ENCODE measurements at regions of chr2 and their contacts with region 1.

Region 1: GRCh38 chr2:68467077-68467960 is at the starts of genes APLF and FBXO48:
- DNase-seq: peak; percentile 99
- ATAC-seq: peak; percentile 93
- H3K4me3 Mint-ChIP-seq: peak within 1 kb of the TSS; percentile 93
- H3K27ac Mint-ChIP-seq: peak within 1 kb of the TSS; percentile 93
- H3K4me1 Mint-ChIP-seq: peaks cover 45% of the 10 kb centered on the region
- H3K27me3 Mint-ChIP-seq: no peaks in the 10 kb centered on the region
- total RNA-seq, gene APLF: 2.5 to 4.3 TPM
- total RNA-seq, gene FBXO48: 2.0 to 2.4 TPM

Region 2: DNA sequence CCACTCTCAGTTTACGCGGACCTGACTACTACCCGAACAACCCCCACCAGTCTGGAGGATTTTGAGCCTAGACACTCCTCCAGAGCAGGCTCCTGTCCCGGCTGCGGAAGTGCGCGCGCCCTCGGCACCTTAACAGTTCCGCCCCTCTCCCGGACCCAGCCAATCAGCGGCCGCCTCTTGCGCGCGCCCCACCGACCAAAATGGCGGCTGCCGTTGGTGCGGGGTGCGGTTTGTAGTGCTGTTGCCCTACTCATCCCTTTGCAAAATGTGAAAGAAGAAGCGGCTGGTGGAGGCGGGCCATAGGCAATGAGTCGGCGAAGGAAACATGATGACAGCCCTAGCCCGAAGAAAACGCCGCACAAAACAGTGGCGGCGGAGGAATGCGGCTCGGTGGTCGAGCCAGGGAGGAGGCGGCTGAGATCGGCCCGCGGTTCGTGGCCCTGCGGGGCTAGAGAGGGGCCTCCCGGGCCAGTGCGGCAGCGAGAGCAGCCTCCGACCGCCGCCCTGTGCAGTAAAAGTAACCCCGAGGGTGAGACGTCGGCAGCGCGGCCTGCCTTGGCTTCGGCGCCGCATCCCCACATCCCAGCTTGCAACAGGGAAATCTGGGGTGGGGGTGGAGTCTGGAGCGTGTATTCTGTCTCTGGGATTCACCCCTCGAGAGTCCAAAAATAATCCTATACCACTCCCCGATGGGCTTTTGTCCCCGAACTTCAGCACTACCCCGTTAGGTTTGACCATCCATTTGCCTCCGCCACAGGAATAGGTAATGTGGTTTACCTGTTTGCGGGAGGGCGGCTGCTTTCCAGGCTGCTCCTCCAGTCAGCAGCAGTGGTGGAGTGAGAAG is 1070.0 kb before region 1 on chr2 and contains the start of gene ETAA1:
- CTCF ChIA-PET with region 1: no interaction called
- POLR2A ChIA-PET with region 1: no interaction called
- intact Hi-C with region 1: loop called in 1 of 2 experiments (anchors 5 kb)
- DNase-seq: peak; percentile 96
- ATAC-seq: peak; percentile 100
- H3K4me3 Mint-ChIP-seq: peak within 1 kb of the TSS; percentile 98
- H3K27ac Mint-ChIP-seq: peak within 1 kb of the TSS; percentile 99
- H3K4me1 Mint-ChIP-seq: peaks cover 12% of the 10 kb centered on the region
- H3K27me3 Mint-ChIP-seq: no peaks in the 10 kb centered on the region
- total RNA-seq, gene ETAA1: 13.7 to 17.1 TPM

Region 3: GRCh38 chr2:68452168-68452900 is 15.0 kb before region 1 on chr2:
- CTCF ChIA-PET with region 1: interaction called, 21 read pairs
- POLR2A ChIA-PET with region 1: no interaction called
- intact Hi-C with region 1: no loop called
- DNase-seq: no peak
- ATAC-seq: no peak
- H3K4me3 Mint-ChIP-seq: no peak overlapping the region
- H3K27ac Mint-ChIP-seq: no peak overlapping the region
- H3K4me1 Mint-ChIP-seq: peaks cover 8% of the 10 kb centered on the region
- H3K27me3 Mint-ChIP-seq: no peaks in the 10 kb centered on the region

Region 4: GRCh38 chr2:68653538-68653982 is 186.2 kb after region 1 on chr2:
- CTCF ChIA-PET with region 1: interaction called, 9 read pairs
- POLR2A ChIA-PET with region 1: no interaction called
- intact Hi-C with region 1: loop called (anchors 1 kb)
- DNase-seq: peak; percentile 73
- ATAC-seq: peak; percentile 90
- H3K4me3 Mint-ChIP-seq: peak overlapping the region; percentile 0
- H3K27ac Mint-ChIP-seq: peak overlapping the region; percentile 68
- H3K4me1 Mint-ChIP-seq: peaks cover 43% of the 10 kb centered on the region
- H3K27me3 Mint-ChIP-seq: peaks cover 15% of the 10 kb centered on the region

Region 5: DNA sequence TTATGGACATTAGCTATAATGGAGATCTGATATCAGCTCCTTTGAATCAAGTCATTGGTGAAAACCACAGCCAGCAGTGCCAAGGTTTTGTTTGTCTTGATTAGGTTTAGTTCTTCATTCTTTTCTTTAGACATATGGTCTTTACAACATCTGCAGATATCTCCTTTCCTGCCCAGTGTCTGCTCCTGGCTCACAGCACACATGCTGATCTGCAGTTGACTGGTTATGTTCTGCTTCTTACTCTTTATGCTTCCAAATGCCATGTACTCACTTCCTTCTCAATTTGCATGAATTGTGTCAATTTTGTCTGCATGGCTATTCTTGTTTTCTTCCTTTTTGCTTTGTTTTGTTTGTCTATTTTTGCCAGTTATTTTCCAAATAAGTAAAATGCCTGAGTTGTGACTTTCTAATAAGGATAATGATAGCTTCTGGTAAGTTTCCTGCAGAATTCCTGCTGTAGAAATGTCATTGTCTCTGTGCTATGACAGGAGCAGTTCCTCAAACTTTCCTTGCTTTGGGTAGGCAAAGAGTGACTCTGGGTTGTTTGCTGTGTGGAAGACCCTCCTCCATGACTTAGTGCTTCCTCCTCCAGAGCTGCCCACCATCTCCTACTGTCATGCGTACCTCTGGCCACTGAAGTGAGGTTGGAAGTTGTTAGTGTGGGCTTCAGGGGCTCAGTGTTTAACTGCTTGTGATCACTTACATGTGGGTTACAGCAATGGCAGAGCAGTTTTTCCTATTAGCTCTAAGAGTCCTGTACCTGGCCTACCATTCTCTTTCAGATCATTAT is 275.5 kb after region 1 on chr2:
- CTCF ChIA-PET with region 1: interaction called, 13 read pairs
- POLR2A ChIA-PET with region 1: interaction called, 3 read pairs
- intact Hi-C with region 1: loop called in 1 of 2 experiments (anchors 5 kb)
- DNase-seq: no peak
- ATAC-seq: no peak
- H3K4me3 Mint-ChIP-seq: peak overlapping the region; percentile 33
- H3K27ac Mint-ChIP-seq: peak overlapping the region; percentile 80
- H3K4me1 Mint-ChIP-seq: peaks cover 97% of the 10 kb centered on the region
- H3K27me3 Mint-ChIP-seq: no peaks in the 10 kb centered on the region

Region 6: DNA sequence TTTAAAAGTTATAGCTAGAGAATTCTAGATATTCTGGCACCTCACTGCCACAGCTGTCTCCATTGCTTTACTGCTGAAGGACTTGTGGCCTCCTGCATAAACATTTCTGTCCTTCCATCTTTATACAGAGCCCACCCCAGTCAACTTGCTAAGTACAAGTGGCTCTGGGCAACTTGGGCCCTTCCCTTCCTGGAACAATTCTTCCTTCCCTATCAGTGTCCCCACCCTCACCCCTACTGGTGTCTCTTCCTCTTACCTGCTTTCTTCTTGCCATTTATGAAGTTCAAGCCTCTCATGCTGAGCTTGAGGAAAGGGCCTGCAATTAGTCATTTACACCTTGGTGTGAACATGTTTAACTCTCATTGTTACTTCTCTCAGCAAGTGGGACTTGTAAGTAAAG is 312.3 kb after region 1 on chr2:
- CTCF ChIA-PET with region 1: no interaction called
- POLR2A ChIA-PET with region 1: no interaction called
- intact Hi-C with region 1: no loop called
- DNase-seq: no peak
- ATAC-seq: peak; percentile 40
- H3K4me3 Mint-ChIP-seq: no peak overlapping the region
- H3K27ac Mint-ChIP-seq: peak overlapping the region; percentile 80
- H3K4me1 Mint-ChIP-seq: peaks cover 56% of the 10 kb centered on the region
- H3K27me3 Mint-ChIP-seq: no peaks in the 10 kb centered on the region

Region 7: DNA sequence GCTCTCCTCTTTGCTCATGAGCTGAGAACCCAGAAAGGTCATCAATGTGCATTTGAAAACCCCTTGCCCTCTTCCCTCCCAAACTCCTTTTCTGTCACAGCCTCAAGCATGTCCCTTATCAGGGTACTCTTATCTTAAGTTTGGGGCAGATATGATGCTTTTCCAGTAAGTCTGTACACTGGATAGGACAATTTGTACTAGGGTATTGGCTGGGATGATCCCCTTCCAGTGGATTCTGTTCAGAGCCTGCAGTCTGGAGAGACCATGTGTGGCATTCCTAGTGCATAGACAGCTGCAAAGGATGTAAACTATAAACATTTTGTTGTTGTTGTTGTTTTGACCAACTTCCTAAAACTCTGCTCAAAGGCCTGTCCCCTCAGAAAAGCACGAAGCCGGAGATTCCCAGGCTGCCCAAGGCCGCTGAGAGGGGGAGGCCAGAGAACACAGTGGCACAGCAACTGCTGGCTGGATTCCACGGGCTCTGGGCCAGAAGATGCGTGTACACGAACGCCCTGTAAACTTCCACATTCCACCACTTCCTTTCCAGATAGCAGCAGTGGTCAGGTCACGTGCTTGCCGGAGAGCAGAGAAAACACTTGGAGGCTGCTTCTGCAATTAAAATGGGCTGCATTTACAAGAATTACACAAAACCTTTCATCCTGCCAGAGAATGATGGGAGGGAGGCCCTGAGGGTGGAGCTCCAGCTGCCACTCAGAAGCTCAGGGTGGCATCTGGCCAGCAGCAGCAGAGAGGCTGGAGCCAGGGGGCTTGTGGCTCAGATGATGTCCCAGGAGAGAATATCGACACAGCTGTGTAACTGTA is 361.8 kb after region 1 on chr2:
- CTCF ChIA-PET with region 1: no interaction called
- POLR2A ChIA-PET with region 1: no interaction called
- intact Hi-C with region 1: no loop called
- DNase-seq: peak; percentile 80
- ATAC-seq: peak; percentile 49
- H3K4me3 Mint-ChIP-seq: peak overlapping the region; percentile 51
- H3K27ac Mint-ChIP-seq: peak overlapping the region; percentile 88
- H3K4me1 Mint-ChIP-seq: peaks cover 55% of the 10 kb centered on the region
- H3K27me3 Mint-ChIP-seq: no peaks in the 10 kb centered on the region

Region 8: GRCh38 chr2:68909793-68910674 is 442.7 kb after region 1 on chr2:
- CTCF ChIA-PET with region 1: interaction called, 51 read pairs
- POLR2A ChIA-PET with region 1: no interaction called
- intact Hi-C with region 1: loop called (anchors 1 kb)
- DNase-seq: peak; percentile 88
- ATAC-seq: peak; percentile 20
- H3K4me3 Mint-ChIP-seq: no peak overlapping the region
- H3K27ac Mint-ChIP-seq: peak overlapping the region; percentile 69
- H3K4me1 Mint-ChIP-seq: peaks cover 36% of the 10 kb centered on the region
- H3K27me3 Mint-ChIP-seq: no peaks in the 10 kb centered on the region

Region 9: GRCh38 chr2:69177785-69178636 is 710.7 kb after region 1 on chr2:
- CTCF ChIA-PET with region 1: no interaction called
- POLR2A ChIA-PET with region 1: no interaction called
- intact Hi-C with region 1: no loop called
- DNase-seq: peak; percentile 61
- ATAC-seq: peak; percentile 96
- H3K4me3 Mint-ChIP-seq: no peak overlapping the region
- H3K27ac Mint-ChIP-seq: peak overlapping the region; percentile 66
- H3K4me1 Mint-ChIP-seq: peaks cover 6% of the 10 kb centered on the region
- H3K27me3 Mint-ChIP-seq: peaks cover 6% of the 10 kb centered on the region

Region 10: DNA sequence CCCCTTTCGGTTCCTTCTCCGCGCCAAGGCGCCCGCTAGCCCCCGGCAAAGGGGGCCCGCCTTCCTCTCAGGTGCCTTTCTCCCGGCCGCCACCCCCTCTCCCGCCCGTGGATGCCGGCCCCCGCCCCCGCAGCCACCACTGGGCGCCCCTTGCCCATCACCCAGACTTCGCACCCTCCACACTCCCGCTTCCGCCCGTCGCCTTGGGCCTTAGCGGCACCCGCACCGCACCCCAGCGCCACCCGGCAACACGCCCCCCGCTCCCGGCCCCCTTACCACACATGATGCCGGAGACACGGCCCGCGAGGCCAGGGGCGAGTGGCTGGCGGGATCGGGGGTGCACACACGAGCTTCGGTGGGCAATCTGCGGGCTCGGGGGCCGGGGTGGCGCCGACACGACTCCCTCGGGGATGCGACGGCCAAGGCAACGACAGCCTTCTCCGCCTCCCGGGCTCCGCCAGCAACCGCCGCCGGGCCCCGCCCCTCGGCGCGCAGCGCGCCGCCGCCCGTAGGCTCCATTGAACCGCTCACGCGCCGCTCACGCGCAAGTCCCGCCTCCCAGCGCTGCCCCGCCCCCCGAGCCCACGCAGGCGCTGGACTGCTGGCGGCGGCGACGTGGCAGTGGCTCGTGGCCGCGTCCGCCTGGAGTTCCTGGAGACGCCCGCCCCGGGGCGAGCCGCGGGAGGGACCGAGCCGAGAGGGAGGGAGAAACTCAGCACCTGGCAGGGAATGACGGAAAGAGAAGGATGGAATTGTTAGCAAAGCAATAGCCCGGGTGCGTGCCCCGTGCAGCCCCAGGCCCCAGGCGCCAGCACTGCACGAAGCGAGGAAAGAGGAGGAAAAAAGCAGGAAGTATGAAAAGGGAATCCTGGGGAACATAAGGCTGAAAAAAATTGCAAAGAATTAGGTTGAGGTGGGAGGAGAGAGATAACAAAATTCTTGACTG is 919.7 kb after region 1 on chr2 and contains the start of gene GFPT1:
- CTCF ChIA-PET with region 1: no interaction called
- POLR2A ChIA-PET with region 1: no interaction called
- intact Hi-C with region 1: loop called in 1 of 2 experiments (anchors 2 kb)
- DNase-seq: peak; percentile 96
- ATAC-seq: peak; percentile 96
- H3K4me3 Mint-ChIP-seq: peak within 1 kb of the TSS; percentile 81
- H3K27ac Mint-ChIP-seq: peak within 1 kb of the TSS; percentile 92
- H3K4me1 Mint-ChIP-seq: peaks cover 45% of the 10 kb centered on the region
- H3K27me3 Mint-ChIP-seq: no peaks in the 10 kb centered on the region
- total RNA-seq, gene GFPT1: 31.0 to 36.1 TPM

Measured in activated CD4-positive, alpha-beta T cell treated with anti-CD3 and anti-CD28 coated beads for 36 hours (primary cell).